Activated T-helper 2 cell treated with anti-CD3 and anti-CD28 coated beads, Interferon-gamma antibody, Interleukin-2, Interleukin-4, amounts not matched to agents 10 μg/mL and 5 μg/mL and 100 μg/mL, durations not matched to agents 14 hours and 24 hours and 36 hours (primary cell): ENCODE measurements at regions of chr1 and their contacts with region 1.

Region 1: DNA sequence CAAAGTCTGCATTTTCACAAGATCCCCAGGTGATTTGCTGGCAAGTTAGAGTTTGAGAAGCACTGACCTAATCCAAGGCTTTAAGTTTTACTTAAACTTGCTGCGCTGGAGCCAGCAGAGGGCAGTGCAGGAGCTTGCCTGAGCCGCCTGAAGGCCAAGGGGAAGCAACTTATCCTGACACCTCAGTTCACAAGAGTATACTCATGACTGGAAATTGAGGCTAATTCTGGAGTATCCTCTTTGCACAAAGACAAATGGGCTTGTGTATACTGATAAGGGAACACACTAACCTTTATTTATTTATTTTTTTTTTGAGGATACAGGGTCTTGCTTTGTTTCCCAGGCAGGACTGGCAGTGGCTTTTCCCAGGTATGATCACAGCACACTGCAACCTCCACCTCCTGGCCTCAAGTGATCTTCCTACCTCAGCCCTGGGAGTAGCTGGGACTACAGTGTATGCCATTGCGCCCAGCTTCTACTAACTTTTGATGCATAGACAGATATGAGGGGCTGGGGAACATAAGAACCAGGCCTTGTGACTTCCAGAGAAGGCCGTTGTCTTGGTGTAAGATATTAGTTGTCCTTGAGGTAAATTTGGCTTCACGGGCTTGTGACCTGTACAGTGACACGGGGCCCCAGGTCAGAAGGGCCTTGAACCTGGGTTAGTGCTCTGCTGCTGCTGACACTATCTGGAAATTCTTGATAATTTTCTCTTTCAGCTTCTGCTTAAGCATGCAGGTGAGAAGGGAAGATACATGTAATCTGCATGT is 29.0 kb upstream of the SLAMF1 start:
- DNase-seq: peak; percentile 63
- H3K4me3 Mint-ChIP-seq: peak overlapping the region; percentile 41
- H3K27ac Mint-ChIP-seq: peak overlapping the region; percentile 68
- H3K4me1 Mint-ChIP-seq: peaks cover 28% of the 10 kb centered on the region
- H3K27me3 Mint-ChIP-seq: no peaks in the 10 kb centered on the region

Region 2: DNA sequence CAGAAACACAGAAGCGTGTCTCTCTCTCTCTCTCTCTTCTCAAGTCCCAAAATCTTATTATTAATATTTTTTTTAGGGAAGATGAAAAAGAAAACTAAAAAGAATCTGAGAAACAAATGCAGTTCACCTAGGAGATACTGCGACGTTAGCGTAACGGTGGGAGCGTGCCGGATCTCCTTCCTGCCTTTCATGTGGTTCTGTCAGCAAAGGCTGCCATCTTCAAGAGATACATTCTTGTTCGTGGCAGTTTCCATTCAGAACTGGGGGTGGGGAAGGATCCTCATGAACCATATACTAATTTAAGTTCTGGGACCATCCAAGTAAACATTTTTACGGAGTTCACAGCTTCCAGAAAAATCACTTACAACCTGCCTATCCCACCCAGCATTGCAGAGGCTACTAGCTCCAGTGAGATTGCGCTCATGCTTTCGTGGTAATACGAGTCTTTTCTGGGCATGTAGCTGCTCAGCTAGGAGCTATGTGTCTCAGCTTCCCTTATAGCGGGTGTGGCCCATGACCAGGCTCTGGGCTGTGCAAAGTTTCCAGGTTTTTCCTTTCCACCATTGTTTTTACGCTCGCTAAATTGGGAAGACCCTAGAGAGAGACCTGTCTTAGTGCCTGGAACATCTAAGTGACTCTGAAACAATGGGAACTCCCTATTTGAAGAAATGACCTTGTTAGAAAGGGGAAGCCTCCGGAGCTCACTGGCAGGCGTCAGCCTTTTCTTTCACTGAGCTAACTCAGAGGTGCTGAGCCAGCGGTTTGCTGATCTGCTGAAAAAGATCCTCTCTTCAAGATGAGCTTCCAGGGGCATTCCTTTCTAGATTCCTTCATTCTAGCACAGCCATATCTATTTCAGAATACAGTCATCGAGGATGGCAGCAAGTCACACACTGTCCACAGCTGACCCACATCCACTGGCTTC is 46.3 kb before region 1 on chr1:
- intact Hi-C with region 1: loop called (anchors 1 kb)
- DNase-seq: peak; percentile 73
- H3K4me3 Mint-ChIP-seq: peak overlapping the region; percentile 20
- H3K27ac Mint-ChIP-seq: peak overlapping the region; percentile 100
- H3K4me1 Mint-ChIP-seq: peaks cover 95% of the 10 kb centered on the region
- H3K27me3 Mint-ChIP-seq: no peaks in the 10 kb centered on the region

Region 3: DNA sequence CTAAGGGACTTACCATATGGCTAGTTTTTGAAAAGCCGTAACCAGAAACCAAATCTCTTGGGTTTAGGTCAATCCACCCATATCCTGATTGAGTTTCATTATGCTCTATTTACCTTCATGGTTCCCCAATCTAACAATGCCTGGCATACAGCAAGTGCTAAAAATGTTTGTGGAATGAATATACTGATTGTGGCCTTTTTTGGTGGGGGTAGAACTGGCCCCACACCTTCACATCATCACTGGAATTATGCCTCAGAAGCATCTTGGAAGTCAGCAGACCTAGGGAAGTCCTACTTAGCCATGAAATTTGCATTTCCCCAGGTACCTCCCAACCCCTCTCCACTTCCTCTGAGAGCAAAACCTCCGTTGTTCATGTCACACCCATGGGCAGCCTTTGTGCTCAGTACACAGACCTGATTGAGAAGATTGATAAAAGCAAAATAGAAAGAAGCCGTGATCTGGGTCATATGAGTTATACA is 11.2 kb before region 1 on chr1:
- intact Hi-C with region 1: loop called (anchors 1 kb)
- DNase-seq: peak; percentile 50
- H3K4me3 Mint-ChIP-seq: peak overlapping the region; percentile 15
- H3K27ac Mint-ChIP-seq: peak overlapping the region; percentile 91
- H3K4me1 Mint-ChIP-seq: peaks cover 62% of the 10 kb centered on the region
- H3K27me3 Mint-ChIP-seq: no peaks in the 10 kb centered on the region

Region 4: GRCh38 chr1:160711602-160712311 is 35.9 kb after region 1 on chr1 and contains the start of gene CD48:
- intact Hi-C with region 1: loop called (anchors 2 kb)
- DNase-seq: peak; percentile 56
- H3K4me3 Mint-ChIP-seq: no peak within 1 kb of the TSS
- H3K27ac Mint-ChIP-seq: no peak within 1 kb of the TSS
- H3K4me1 Mint-ChIP-seq: peaks cover 29% of the 10 kb centered on the region
- H3K27me3 Mint-ChIP-seq: no peaks in the 10 kb centered on the region
- total RNA-seq, gene CD48: 101 and 103 TPM in 2 replicates